CD14-positive monocyte (primary cell): ENCODE measurements at regions of chr17 and their contacts with region 1.

Region 1: DNA sequence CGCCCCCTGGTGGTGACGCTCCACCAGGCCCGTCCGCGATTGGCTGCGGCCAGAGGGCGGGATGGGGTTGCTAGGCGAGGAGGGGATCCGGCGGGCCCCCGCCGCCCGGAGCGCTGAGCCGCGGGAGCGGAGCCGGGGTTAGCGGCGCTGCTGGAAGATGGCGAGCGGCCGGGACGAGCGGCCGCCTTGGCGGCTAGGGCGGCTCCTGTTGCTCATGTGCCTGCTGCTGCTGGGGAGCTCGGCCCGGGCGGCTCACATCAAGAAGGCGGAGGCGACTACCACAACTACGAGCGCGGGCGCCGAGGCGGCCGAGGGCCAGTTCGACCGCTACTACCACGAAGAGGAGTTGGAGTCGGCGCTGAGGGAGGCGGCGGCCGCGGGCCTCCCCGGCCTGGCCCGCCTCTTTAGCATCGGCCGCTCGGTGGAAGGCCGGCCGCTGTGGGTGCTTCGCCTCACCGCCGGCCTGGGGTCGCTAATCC is at the start of gene CPD:
- DNase-seq: peak; percentile 92 to 95 (median 94)
- H3K4me3 ChIP-seq: peak within 1 kb of the TSS; percentile 77 to 94 (median 85)
- H3K4me3 Mint-ChIP-seq: peak within 1 kb of the TSS; percentile 94 to 97
- H3K27ac ChIP-seq: peak within 1 kb of the TSS; percentile 62 to 80
- H3K27ac Mint-ChIP-seq: peak within 1 kb of the TSS; percentile 84 to 96 (median 90)
- H3K4me1 ChIP-seq: peaks cover 33 to 47% of the 10 kb centered on the region in 2 donors
- H3K4me1 Mint-ChIP-seq: peaks cover 54% of the 10 kb centered on the region
- H3K27me3 ChIP-seq: no peaks in the 10 kb centered on the region
- H3K27me3 Mint-ChIP-seq: peaks cover 3 to 11% (median 4%) of the 10 kb centered on the region in 3 donors
- CTCF ChIP-seq: no peak
- polyA plus RNA-seq, gene CPD: 9.2 to 47.0 (median 32.2) TPM

Region 2: GRCh38 chr17:30291543-30292285 is 87.1 kb before region 1 on chr17 and contains the start of gene BLMH:
- intact Hi-C with region 1: loop called in 1 of 2 experiments (anchors 10 kb)
- DNase-seq: peak; percentile 52 to 65 (median 60)
- H3K4me3 ChIP-seq: peak within 1 kb of the TSS; percentile 70 to 96 (median 93)
- H3K4me3 Mint-ChIP-seq: peak within 1 kb of the TSS; percentile 89 to 95
- H3K27ac ChIP-seq: peak within 1 kb of the TSS in 1 of 2 donors; percentile 12
- H3K27ac Mint-ChIP-seq: peak within 1 kb of the TSS in 6 of 7 donors; percentile 14 to 89 (median 54)
- H3K4me1 ChIP-seq: peaks cover 17 to 21% of the 10 kb centered on the region in 2 donors
- H3K4me1 Mint-ChIP-seq: peaks cover 14% of the 10 kb centered on the region
- H3K27me3 ChIP-seq: peaks cover 4 to 9% of the 10 kb centered on the region in 2 donors
- H3K27me3 Mint-ChIP-seq: peaks cover 4 to 8% (median 8%) of the 10 kb centered on the region in 3 donors
- CTCF ChIP-seq: no peak
- polyA plus RNA-seq, gene BLMH: 6.6 to 10.8 (median 10.4) TPM

Region 3: DNA sequence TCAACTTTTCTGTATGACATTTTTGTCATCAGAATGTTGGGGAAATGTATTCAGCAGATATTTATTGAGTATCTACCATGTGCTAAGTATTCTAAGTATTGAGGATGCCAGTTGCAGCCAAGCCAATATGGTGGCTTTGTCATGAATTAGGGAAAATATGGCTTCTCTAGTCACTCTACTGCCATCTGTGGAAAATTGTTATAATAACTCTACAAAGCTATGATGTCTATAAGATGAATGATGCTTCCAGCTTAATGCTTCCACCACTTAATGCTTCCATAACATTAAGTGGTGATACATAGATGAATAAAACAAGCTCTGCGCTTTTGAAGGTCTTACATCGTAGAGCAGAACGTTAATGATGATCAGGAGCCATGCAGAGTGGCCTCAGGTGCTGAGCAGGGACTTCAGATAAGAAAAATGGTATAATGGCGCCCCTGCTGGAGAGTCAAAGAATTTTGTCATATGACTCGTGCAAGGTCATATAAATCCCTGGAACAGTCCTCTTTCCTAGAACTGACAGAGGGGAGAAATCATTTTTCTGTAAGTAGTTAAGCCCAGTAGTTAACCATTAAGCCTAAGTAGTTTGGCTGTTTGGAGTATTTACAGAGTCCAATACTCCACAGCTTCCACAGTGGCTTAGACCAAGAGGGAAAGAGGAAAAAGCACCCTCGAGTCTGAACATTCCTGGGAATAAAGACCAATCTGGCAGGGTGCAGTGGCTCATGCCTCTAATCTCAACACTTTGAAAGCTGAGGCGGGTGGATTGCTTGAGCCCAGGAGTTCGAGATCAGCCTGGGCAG is 42.3 kb before region 1 on chr17:
- intact Hi-C with region 1: loop called (anchors 5 kb)
- DNase-seq: peak; percentile 34 to 60 (median 60)
- H3K4me3 ChIP-seq: no peak overlapping the region
- H3K4me3 Mint-ChIP-seq: no peak overlapping the region
- H3K27ac ChIP-seq: no peak overlapping the region
- H3K27ac Mint-ChIP-seq: peak overlapping the region in 4 of 7 donors; percentile 30 to 80 (median 58)
- H3K4me1 ChIP-seq: peaks cover 23 to 38% of the 10 kb centered on the region in 2 donors
- H3K4me1 Mint-ChIP-seq: peaks cover 48% of the 10 kb centered on the region
- H3K27me3 ChIP-seq: no peaks in the 10 kb centered on the region
- H3K27me3 Mint-ChIP-seq: peaks cover 1 to 3% (median 2%) of the 10 kb centered on the region in 3 donors
- CTCF ChIP-seq: peak; percentile 97

Region 4: DNA sequence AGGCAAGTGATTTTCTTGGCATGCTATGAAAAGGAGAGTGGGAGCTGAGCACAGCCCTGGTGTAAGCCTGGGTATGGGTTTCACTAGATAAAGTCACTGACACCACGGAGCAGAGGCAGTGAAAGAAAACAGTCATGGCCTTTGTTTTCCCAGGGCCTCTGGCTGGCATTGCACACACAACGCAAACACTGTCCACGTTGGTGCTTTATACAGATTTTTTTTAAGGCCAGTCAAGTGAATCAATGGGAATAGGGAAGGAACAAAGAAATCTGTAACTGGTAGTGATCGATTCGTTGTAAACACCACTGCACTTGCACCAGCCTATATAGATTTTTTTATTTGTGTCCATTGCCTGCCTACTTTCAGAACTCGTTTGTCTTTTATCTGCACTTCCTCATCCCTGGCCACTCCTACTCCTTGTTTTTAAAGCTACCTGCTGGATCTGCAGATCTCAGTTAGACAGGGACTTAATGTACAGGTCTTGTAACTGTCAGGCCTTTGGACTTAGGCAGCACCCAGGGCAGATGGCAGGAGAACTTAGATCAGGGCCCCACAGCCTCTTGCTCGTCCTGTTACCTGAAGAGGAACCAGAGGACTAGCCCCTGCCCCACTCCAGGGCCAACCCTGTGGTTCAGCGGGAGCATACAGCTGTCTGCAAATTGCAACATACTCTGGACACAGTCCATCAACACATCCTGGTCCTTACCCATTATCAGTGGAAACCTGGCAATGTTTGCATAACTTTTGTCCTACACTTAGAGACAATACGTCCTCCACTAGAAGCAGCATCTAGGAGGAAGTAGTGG is 34.4 kb before region 1 on chr17:
- intact Hi-C with region 1: loop called (anchors 5 kb)
- DNase-seq: peak; percentile 47 to 76 (median 66)
- H3K4me3 ChIP-seq: peak overlapping the region in 1 of 3 experiments; percentile 52
- H3K4me3 Mint-ChIP-seq: peak overlapping the region; percentile 10 to 71
- H3K27ac ChIP-seq: peak overlapping the region; percentile 73 to 80
- H3K27ac Mint-ChIP-seq: peak overlapping the region; percentile 82 to 94 (median 90)
- H3K4me1 ChIP-seq: peaks cover 41 to 56% of the 10 kb centered on the region in 2 donors
- H3K4me1 Mint-ChIP-seq: peaks cover 53% of the 10 kb centered on the region
- H3K27me3 ChIP-seq: no peaks in the 10 kb centered on the region
- H3K27me3 Mint-ChIP-seq: no peaks in the 10 kb centered on the region
- CTCF ChIP-seq: no peak